B cell (primary cell): ENCODE measurements at regions of chr19 and their contacts with region 1.

Region 1: GRCh38 chr19:35509861-35510625 is 3.4 kb downstream of the DMKN start:
- DNase-seq: peak; percentile 84
- ATAC-seq: peak; percentile 86
- H3K4me3 ChIP-seq: peak overlapping the region in 4 of 5 experiments; percentile 6 to 62 (median 37)
- H3K4me3 Mint-ChIP-seq: peak overlapping the region; percentile 76
- H3K27ac ChIP-seq: no peak overlapping the region
- H3K27ac Mint-ChIP-seq: peak overlapping the region; percentile 59
- H3K4me1 ChIP-seq: peaks cover 19 to 21% of the 10 kb centered on the region in 2 donors
- H3K4me1 Mint-ChIP-seq: peaks cover 19% of the 10 kb centered on the region
- H3K27me3 ChIP-seq: peaks cover 0 to 71% (median 11%) of the 10 kb centered on the region in 4 experiments
- H3K27me3 Mint-ChIP-seq: peaks cover 59% of the 10 kb centered on the region
- CTCF ChIP-seq: peak; percentile 96

Region 2: DNA sequence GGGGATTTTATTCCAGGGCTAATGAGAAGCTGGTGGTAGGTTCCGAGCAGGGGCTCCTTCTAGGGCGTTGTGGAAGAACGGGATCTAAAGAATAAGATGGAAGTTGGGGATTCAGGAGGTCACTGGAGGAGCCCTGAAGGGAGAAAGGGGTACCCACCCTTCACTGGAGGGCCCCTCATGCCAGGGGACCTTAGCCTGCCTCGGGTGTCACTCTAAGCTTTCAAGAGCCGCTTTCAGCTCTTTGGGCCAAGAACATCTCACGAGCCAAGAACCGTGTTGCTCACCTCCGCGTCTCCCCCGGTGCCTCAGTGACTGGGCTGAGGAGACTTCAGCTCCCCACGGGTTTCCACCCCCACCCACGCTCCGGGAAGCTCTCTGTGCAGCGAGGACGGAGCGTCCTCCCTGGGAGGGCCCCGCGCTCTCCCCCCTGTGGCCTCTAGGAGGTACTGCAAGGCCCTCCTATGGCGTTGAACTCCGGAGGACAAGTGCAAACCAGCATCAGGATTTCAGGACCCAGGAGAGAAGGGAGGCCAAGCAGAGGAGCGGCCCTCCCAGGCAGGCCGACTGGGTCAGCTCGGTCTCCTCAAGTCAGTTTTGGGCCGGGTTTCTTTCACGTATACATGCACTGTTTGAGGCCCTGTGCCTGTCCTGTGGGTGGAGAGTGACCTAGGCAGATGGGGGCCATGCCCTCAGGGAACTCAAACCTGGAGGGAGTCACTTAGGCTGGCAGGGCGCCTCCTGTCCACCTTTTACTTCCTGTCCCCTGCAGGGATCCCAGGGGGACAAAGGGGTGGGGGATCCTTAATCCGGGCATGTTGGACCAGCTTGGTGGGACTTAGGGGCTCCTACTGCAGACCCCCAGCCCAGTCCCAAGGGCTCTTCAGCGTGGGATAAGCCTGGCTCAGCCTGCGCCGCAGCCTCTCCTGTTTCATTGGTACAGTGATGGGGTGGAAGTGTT is 14.7 kb before region 1 on chr19:
- CTCF ChIA-PET with region 1: interaction called, 22 read pairs
- POLR2A ChIA-PET with region 1: no interaction called
- intact Hi-C with region 1: no loop called
- DNase-seq: peak; percentile 82
- ATAC-seq: peak; percentile 99
- H3K4me3 ChIP-seq: peak overlapping the region in 1 of 5 experiments; percentile 24
- H3K4me3 Mint-ChIP-seq: no peak overlapping the region
- H3K27ac ChIP-seq: no peak overlapping the region
- H3K27ac Mint-ChIP-seq: no peak overlapping the region
- H3K4me1 ChIP-seq: peaks cover 6 to 11% of the 10 kb centered on the region in 2 donors
- H3K4me1 Mint-ChIP-seq: peaks cover 8% of the 10 kb centered on the region
- H3K27me3 ChIP-seq: peaks cover 0 to 6% (median 2%) of the 10 kb centered on the region in 4 experiments
- H3K27me3 Mint-ChIP-seq: peaks cover 9% of the 10 kb centered on the region
- CTCF ChIP-seq: peak; percentile 100

Region 3: DNA sequence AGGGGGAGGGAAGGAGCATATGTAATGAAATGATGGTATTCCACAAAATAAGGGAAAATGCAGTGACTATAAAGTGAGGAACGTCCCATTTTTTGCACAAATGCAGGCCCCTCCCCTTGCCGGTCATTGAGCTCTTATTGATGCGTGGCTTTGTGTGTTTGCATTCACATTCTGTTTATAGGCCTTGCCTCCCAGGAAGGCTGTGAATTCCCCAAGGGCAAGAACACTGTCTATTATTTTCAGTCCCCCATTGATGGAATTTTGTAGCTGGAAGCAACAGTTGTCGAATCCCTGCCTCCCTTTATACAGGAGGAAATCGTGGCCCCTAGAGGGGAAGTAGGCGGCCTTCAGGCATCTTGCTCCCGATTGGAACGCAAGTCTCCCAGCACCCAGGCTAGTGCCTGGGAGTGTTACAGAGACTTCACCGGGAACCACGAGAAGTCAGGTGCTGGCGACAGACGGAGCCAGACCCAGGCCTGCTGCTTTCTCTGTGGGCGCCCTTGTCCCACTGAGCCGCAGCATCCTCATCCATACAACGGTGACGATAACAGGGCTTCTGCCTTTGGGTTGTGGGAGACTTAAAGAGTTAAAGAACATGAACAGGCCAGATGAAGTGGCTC is 11.2 kb after region 1 on chr19:
- CTCF ChIA-PET with region 1: interaction called, 11 read pairs
- POLR2A ChIA-PET with region 1: no interaction called
- intact Hi-C with region 1: no loop called
- DNase-seq: no peak
- ATAC-seq: no peak
- H3K4me3 ChIP-seq: no peak overlapping the region
- H3K4me3 Mint-ChIP-seq: no peak overlapping the region
- H3K27ac ChIP-seq: no peak overlapping the region
- H3K27ac Mint-ChIP-seq: no peak overlapping the region
- H3K4me1 ChIP-seq: no peaks in the 10 kb centered on the region
- H3K4me1 Mint-ChIP-seq: no peaks in the 10 kb centered on the region
- H3K27me3 ChIP-seq: peaks cover 0 to 5% (median 2%) of the 10 kb centered on the region in 4 experiments
- H3K27me3 Mint-ChIP-seq: peaks cover 34% of the 10 kb centered on the region
- CTCF ChIP-seq: no peak

Region 4: GRCh38 chr19:35592226-35592625 is 82.2 kb after region 1 on chr19:
- CTCF ChIA-PET with region 1: interaction called, 24 read pairs
- POLR2A ChIA-PET with region 1: no interaction called
- intact Hi-C with region 1: no loop called
- DNase-seq: peak; percentile 64
- ATAC-seq: no peak
- H3K4me3 ChIP-seq: no peak overlapping the region
- H3K4me3 Mint-ChIP-seq: no peak overlapping the region
- H3K27ac ChIP-seq: no peak overlapping the region
- H3K27ac Mint-ChIP-seq: no peak overlapping the region
- H3K4me1 ChIP-seq: no peaks in the 10 kb centered on the region
- H3K4me1 Mint-ChIP-seq: no peaks in the 10 kb centered on the region
- H3K27me3 ChIP-seq: peaks cover 0 to 7% (median 0%) of the 10 kb centered on the region in 4 experiments
- H3K27me3 Mint-ChIP-seq: peaks cover 16% of the 10 kb centered on the region
- CTCF ChIP-seq: peak; percentile 59